Activated CD4-positive, alpha-beta T cell treated with anti-CD3 and anti-CD28 coated beads, Interleukin-2, amount 10 ng/mL, durations not matched to agents 24 days and 14 days (primary cell): ENCODE measurements at regions of chr6 and their contacts with region 1.

Region 1: GRCh38 chr6:106979427-106979884 is 4.9 kb upstream of the CD24 start:
- DNase-seq: peak; percentile 93
- H3K4me3 Mint-ChIP-seq: no peak overlapping the region
- H3K27ac Mint-ChIP-seq: no peak overlapping the region
- H3K4me1 Mint-ChIP-seq: peaks cover 3% of the 10 kb centered on the region
- H3K27me3 Mint-ChIP-seq: peaks cover 36% of the 10 kb centered on the region

Region 2: GRCh38 chr6:106339334-106340029 is 640.0 kb before region 1 on chr6:
- intact Hi-C with region 1: loop called (anchors 1 kb)
- DNase-seq: peak; percentile 82
- H3K4me3 Mint-ChIP-seq: no peak overlapping the region
- H3K27ac Mint-ChIP-seq: no peak overlapping the region
- H3K4me1 Mint-ChIP-seq: peaks cover 5% of the 10 kb centered on the region
- H3K27me3 Mint-ChIP-seq: peaks cover 29% of the 10 kb centered on the region

Region 3: GRCh38 chr6:106444777-106445507 is 534.5 kb before region 1 on chr6:
- intact Hi-C with region 1: loop called (anchors 1 kb)
- DNase-seq: peak; percentile 84
- H3K4me3 Mint-ChIP-seq: no peak overlapping the region
- H3K27ac Mint-ChIP-seq: no peak overlapping the region
- H3K4me1 Mint-ChIP-seq: peaks cover 11% of the 10 kb centered on the region
- H3K27me3 Mint-ChIP-seq: peaks cover 34% of the 10 kb centered on the region

Region 4: DNA sequence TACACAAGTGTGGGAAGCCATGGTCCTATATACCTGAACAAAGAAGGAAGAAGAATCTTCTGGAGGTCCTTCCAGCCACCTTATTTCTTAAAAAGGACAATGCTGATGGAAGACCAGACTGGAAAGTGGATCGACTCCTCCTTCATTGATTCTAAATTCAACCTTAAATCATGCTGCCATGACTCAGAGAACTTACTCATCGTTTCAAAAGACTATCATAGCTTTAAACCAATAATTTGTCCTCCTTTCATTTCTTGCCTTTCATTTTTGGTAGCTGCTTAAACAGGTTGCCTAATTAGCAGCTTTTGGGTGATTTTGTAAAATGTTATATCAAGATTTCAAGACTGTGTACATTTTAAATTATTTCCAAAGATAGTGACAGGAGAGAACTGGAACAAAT is 410.9 kb before region 1 on chr6:
- intact Hi-C with region 1: loop called (anchors 5 kb)
- DNase-seq: no peak
- H3K4me3 Mint-ChIP-seq: no peak overlapping the region
- H3K27ac Mint-ChIP-seq: no peak overlapping the region
- H3K4me1 Mint-ChIP-seq: peaks cover 4% of the 10 kb centered on the region
- H3K27me3 Mint-ChIP-seq: no peaks in the 10 kb centered on the region

Region 5: DNA sequence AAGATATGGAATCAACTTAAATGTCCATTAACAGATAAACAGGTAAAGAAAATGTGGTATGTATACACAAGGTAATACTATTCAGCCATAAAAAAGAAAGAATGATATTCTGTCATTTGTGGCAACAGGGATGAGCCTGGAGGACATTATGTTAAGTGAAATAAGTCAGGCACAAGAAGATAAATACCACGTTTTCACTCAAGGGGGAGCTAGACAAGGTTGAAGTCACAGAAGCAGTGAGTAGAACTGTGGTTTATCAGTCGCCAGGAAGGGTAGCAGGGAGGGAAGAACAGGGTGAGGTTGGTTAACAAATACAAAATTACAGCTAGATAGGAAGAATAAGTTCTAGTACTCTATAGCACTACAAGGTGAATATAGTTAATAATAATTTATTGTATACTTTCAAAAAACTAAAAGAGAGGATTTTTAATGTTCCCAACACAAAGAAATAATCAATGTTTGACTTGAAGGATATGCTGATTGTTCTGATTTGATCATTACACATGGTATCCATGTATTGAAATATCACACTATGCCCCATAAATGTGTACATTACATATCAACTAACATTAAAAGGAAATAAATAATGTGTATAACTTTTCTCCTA is 371.3 kb before region 1 on chr6:
- intact Hi-C with region 1: loop called (anchors 1 kb)
- DNase-seq: peak; percentile 78
- H3K4me3 Mint-ChIP-seq: no peak overlapping the region
- H3K27ac Mint-ChIP-seq: no peak overlapping the region
- H3K4me1 Mint-ChIP-seq: peaks cover 11% of the 10 kb centered on the region
- H3K27me3 Mint-ChIP-seq: no peaks in the 10 kb centered on the region

Region 6: GRCh38 chr6:106894978-106895702 is 84.3 kb before region 1 on chr6:
- intact Hi-C with region 1: no loop called
- DNase-seq: no peak
- H3K4me3 Mint-ChIP-seq: no peak overlapping the region
- H3K27ac Mint-ChIP-seq: no peak overlapping the region
- H3K4me1 Mint-ChIP-seq: no peaks in the 10 kb centered on the region
- H3K27me3 Mint-ChIP-seq: peaks cover 1% of the 10 kb centered on the region

Region 7: DNA sequence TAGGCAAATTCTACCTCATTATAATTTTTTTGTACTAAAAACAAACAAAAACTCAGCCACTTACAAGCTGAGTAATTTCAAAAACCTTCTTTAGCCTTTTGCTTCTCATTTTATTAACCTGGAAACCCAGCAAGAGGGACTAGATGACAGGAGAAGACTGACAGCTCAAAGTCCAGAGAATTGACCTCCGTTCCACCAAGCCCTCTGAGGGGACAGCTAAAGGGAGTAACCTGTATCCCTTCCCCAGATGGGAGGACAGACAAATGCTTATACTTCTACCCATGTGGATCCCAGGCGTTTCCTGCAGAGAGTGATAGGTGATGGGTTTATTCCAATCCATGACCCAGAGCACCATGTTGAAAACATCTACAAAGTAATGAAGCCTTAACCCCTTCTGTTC is 30.0 kb after region 1 on chr6:
- intact Hi-C with region 1: no loop called
- DNase-seq: no peak
- H3K4me3 Mint-ChIP-seq: no peak overlapping the region
- H3K27ac Mint-ChIP-seq: no peak overlapping the region
- H3K4me1 Mint-ChIP-seq: no peaks in the 10 kb centered on the region
- H3K27me3 Mint-ChIP-seq: peaks cover 2% of the 10 kb centered on the region